ENCODE measurements at regions of chr2 and their contacts with region 1.

Region 1: DNA sequence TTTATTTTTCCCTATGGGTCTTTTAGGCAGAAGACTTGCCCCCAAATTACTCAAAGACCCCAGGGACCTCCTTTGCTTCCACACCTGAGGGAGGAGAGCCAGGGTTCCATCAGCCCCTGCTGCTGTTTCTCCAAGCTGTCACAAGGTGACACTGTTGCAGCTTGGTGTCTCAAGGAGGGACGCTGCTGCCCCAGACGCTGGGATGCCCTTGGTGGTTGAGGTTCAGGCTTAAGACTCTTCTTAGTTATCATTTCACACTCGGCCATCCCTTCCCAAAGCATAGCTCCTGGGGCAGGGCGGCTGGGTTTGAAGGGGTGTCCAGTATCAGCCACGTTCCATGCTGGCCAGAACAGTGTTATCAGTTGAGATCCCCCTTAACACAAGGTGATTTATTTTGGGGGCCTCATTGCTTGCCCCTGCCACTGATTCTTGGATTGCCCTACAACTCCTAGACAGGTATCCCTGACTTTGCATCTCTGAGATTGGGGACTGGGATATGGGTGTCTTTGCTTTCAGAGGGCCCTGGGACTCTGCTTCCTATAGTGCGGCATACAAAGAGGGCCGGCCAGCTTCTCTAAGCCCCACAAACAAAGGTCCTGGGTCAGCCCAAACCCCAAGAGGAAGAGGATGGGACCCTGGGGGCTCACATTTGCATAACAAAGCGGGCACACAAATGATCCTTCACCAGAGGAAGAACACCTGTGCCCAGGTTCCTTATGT is 22.7 kb downstream of the GPR55 start:
- DNase-seq: peak; percentile 57 to 75
- ATAC-seq: peak; percentile 80 to 93; a peak in 5 of 6 replicates
- H3K4me3 ChIP-seq: no peak overlapping the region
- H3K27ac ChIP-seq: no peak overlapping the region
- H3K4me1 ChIP-seq: no peaks in the 10 kb centered on the region
- CTCF ChIP-seq: peak; percentile 74
- EP300 ChIP-seq: no peak
- POLR2A ChIP-seq: no peak
- RAD21 ChIP-seq: peak; percentile 86 to 91

Region 2: GRCh38 chr2:230913406-230914143 is 11.2 kb after region 1 on chr2:
- CTCF ChIA-PET with region 1: interaction called, 12 read pairs
- POLR2A ChIA-PET with region 1: no interaction called
- DNase-seq: peak; percentile 30 to 46
- ATAC-seq: peak in 1 of 2 experiments; percentile 70; a peak in 3 of 6 replicates
- H3K4me3 ChIP-seq: no peak overlapping the region
- H3K27ac ChIP-seq: no peak overlapping the region
- H3K4me1 ChIP-seq: peaks cover 6% of the 10 kb centered on the region
- CTCF ChIP-seq: no peak; the same call in 2 of the 3 replicates
- EP300 ChIP-seq: no peak
- POLR2A ChIP-seq: no peak
- RAD21 ChIP-seq: peak in 1 of 2 experiments; percentile 16; a peak in 1 of 5 replicates

Region 3: DNA sequence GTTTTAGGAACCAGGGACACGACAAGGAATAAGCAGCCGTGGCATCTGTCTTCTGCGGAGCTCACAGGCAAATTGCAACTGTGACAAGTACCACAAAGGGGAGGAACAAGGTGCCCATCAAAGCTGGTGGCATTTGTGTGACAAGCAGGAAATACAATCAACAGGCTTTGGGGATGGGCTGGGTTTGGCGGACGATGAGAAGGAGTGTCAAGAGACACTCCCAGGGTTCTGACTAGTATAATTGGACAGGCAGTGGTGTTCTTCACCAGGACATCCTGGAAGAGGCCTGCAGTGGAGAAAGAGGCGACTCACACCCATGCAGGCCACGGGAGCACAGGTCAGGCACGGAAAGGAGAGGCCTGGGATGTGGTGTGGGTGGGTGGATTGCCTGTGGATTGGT is 79.4 kb after region 1 on chr2:
- CTCF ChIA-PET with region 1: interaction called, 64 read pairs
- POLR2A ChIA-PET with region 1: no interaction called
- DNase-seq: no peak
- ATAC-seq: no peak; a peak in 1 of 6 replicates
- H3K4me3 ChIP-seq: no peak overlapping the region
- H3K27ac ChIP-seq: no peak overlapping the region
- H3K4me1 ChIP-seq: 0 out of 3 replicates have a peak, but pooled peaks cover 1% of the 10 kb centered on the region
- CTCF ChIP-seq: no peak
- EP300 ChIP-seq: no peak
- POLR2A ChIP-seq: no peak
- RAD21 ChIP-seq: no peak